ENCODE measurements at regions of chr3 and their contacts with region 1.

Region 1: GRCh38 chr3:12663936-12664908 is at the start of gene RAF1:
- DNase-seq: peak; percentile 97
- H3K4me3 Mint-ChIP-seq: peak within 1 kb of the TSS; percentile 72
- H3K27ac Mint-ChIP-seq: peak within 1 kb of the TSS; percentile 98
- H3K4me1 Mint-ChIP-seq: peaks cover 18% of the 10 kb centered on the region
- H3K27me3 Mint-ChIP-seq: no peaks in the 10 kb centered on the region
- CTCF ChIP-seq: no peak
- total RNA-seq, gene RAF1: 75.5 and 76.8 TPM in 2 replicates

Region 2: DNA sequence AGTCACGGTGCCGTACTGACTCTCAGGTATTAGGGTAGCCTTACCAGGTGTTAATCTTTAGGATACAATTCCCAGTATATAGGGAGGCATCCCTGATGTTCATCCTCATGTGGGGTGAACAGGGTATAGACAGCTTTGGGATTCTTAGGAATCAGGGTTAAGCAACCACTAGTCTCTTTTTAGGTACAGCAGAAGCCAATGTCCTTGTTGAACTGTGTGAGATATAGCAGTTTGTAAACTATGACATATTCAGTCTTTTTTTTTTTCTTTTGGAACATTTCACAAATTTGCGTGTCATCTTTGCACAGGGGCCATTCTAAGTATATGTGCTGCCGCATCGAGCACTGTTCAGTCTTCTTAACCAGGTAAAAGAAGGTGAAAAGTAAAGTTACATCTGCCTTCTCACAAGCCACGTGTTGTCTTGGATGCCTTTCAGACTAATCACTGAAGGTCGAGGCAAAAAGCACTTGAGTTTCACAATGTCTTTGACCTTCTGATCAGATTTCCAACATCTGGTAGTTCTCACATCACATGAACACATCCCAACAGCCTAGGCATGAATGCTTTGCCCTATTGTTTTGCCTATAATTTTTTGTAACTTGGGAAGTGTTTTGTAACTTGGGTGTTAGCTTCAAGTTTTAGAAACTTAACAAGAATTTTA is 162.7 kb before region 1 on chr3:
- CTCF ChIA-PET with region 1: no interaction called
- POLR2A ChIA-PET with region 1: no interaction called
- intact Hi-C with region 1: no loop called
- DNase-seq: peak; percentile 60
- H3K4me3 Mint-ChIP-seq: no peak overlapping the region
- H3K27ac Mint-ChIP-seq: peak overlapping the region; percentile 75
- H3K4me1 Mint-ChIP-seq: peaks cover 16% of the 10 kb centered on the region
- H3K27me3 Mint-ChIP-seq: no peaks in the 10 kb centered on the region
- CTCF ChIP-seq: no peak

Region 3: DNA sequence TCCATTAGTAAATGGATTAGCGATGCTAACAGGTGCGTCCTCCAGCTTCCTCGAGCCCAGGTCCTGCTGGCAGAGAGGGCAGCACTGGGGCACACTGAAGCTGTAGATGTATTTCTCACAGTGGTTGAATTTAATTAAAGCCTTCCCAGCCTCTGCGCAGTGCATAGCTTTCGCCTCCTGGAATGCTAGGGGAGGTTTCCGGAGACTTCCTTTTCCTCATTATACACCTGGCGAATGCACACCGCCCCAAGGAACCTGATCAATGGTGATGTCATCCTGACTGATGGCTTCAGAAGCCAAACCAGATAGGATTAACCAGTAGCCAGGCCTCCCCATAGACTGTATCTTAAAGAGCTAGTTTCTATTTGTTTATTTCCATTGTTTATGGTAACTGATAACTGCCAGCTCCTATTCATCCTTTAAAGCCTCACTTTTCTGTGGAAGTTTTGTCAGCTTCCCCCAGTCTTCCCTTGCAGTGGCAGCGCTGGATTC is 118.9 kb before region 1 on chr3 and contains the start of gene MKRN2OS:
- CTCF ChIA-PET with region 1: no interaction called
- POLR2A ChIA-PET with region 1: interaction called, 15 read pairs
- intact Hi-C with region 1: no loop called
- DNase-seq: peak; percentile 86
- H3K4me3 Mint-ChIP-seq: peak within 1 kb of the TSS; percentile 73
- H3K27ac Mint-ChIP-seq: peak within 1 kb of the TSS; percentile 64
- H3K4me1 Mint-ChIP-seq: peaks cover 7% of the 10 kb centered on the region
- H3K27me3 Mint-ChIP-seq: no peaks in the 10 kb centered on the region
- CTCF ChIP-seq: no peak
- total RNA-seq, gene MKRN2OS: 0.37 and 0.47 TPM in 2 replicates

Region 4: DNA sequence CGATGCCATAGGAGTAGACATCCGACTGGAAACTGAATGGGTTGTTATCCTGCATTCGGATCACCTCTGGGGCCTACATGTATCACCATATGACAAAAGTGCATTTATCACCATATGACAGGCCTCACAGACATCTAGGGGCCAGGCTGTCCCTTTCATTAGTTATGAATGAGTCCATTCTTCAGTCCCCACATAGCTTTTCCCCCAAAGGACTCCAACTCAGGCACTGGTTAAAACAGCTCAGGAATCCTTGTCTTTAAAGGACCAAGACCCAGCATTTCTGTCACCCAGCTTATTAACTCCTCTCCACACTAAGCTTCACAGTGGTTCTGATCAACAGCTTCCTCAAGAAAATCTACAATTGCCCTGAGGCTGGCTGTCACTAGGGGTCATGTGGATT is 79.0 kb before region 1 on chr3:
- CTCF ChIA-PET with region 1: interaction called, 3 read pairs
- POLR2A ChIA-PET with region 1: interaction called, 12 read pairs
- intact Hi-C with region 1: no loop called
- DNase-seq: no peak
- H3K4me3 Mint-ChIP-seq: no peak overlapping the region
- H3K27ac Mint-ChIP-seq: peak overlapping the region; percentile 59
- H3K4me1 Mint-ChIP-seq: no peaks in the 10 kb centered on the region
- H3K27me3 Mint-ChIP-seq: no peaks in the 10 kb centered on the region
- CTCF ChIP-seq: no peak

Region 5: GRCh38 chr3:12681943-12682390 is 17.7 kb after region 1 on chr3:
- CTCF ChIA-PET with region 1: interaction called, 5 read pairs
- POLR2A ChIA-PET with region 1: interaction called, 46 read pairs
- intact Hi-C with region 1: no loop called
- DNase-seq: peak; percentile 76
- H3K4me3 Mint-ChIP-seq: no peak overlapping the region
- H3K27ac Mint-ChIP-seq: peak overlapping the region; percentile 8
- H3K4me1 Mint-ChIP-seq: peaks cover 11% of the 10 kb centered on the region
- H3K27me3 Mint-ChIP-seq: no peaks in the 10 kb centered on the region
- CTCF ChIP-seq: no peak

Region 6: DNA sequence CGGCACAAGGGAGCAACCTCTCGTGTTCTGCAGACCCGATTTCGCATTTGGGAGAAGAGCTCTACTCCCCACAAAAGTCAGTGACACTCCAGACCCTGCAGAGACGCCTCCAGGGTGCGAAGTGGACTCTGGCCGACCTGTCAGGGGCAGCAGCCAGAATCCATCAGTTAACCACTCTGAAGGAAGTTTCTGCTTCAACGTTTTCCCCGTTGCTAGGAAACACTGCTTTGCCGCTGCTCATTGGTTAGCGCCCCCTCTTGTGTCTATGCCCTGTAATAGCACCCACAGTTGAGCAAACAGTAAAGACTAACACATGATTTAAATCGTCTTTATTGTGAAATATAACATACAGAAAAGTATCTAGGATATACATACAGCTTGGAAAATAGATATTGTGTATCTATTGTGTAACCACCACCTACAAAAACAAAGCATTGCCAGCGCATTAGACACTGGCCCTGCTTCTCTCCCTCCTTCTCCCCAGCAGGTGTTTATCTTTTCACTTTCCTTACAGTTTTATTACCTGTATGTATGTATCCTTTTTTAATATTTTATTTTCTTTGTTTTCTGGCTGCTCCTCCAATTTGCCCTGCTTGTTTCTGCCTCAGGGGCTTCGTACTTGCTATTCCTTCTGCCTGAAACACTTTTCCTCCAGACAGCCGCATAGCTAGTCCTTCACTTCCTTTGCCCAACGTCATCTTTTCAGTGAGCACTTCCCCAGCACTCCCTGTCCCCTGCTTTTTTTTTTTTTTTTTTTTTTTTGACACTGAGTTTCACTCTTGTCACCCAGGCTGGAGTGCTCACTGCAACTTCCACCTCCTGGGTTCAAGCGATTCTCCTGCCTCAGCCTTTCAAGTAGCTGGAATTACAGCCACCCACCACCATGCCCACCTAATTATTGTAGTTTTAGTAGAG is 56.0 kb after region 1 on chr3:
- CTCF ChIA-PET with region 1: interaction called, 4 read pairs
- POLR2A ChIA-PET with region 1: interaction called, 5 read pairs
- intact Hi-C with region 1: loop called (anchors 1 kb)
- DNase-seq: peak; percentile 84
- H3K4me3 Mint-ChIP-seq: no peak overlapping the region
- H3K27ac Mint-ChIP-seq: peak overlapping the region; percentile 63
- H3K4me1 Mint-ChIP-seq: peaks cover 15% of the 10 kb centered on the region
- H3K27me3 Mint-ChIP-seq: no peaks in the 10 kb centered on the region
- CTCF ChIP-seq: peak; percentile 84

Region 7: GRCh38 chr3:12841149-12841970 is 177.1 kb after region 1 on chr3 and contains the start of gene RPL32:
- CTCF ChIA-PET with region 1: no interaction called
- POLR2A ChIA-PET with region 1: interaction called, 11 read pairs
- intact Hi-C with region 1: no loop called
- DNase-seq: peak; percentile 95
- H3K4me3 Mint-ChIP-seq: peak within 1 kb of the TSS; percentile 96
- H3K27ac Mint-ChIP-seq: peak within 1 kb of the TSS; percentile 100
- H3K4me1 Mint-ChIP-seq: peaks cover 25% of the 10 kb centered on the region
- H3K27me3 Mint-ChIP-seq: no peaks in the 10 kb centered on the region
- CTCF ChIP-seq: peak; percentile 58
- total RNA-seq, gene RPL32: 2,288 and 2,498 TPM in 2 replicates

Region 8: DNA sequence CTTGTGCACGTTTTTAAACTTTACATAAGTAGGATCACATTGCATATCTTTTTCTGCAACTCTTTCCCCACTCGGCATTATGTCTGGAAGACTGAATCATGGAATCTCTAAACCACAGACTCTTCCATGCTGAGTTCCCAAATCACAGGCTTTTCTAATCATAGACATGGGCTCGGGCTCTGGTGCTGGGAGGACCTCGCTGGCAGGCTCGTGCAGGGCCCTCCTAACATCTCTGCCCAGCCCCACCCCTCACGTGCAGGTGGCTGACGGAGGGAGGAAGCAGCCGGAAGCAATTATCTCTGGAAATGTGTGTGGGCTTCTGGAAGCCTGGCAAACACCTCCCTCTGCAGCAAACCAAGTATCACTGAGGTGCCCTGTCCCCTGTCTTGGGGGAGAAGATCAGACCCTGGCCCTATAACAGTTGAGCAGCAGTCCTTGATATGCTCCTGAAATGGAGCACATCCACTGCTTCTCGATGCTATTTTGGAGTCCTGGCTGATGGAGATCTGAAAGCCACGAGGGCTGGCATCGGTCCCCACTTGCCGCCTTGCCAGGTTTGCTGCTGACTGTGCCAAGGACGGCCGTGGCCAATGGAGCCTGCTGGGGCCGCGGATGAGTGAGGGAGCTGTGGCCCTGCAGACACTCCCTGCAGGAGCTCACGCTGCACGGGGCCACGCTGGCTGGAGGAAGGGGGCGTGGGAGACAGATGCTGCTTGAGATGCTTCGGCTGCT is 413.4 kb after region 1 on chr3:
- CTCF ChIA-PET with region 1: no interaction called
- POLR2A ChIA-PET with region 1: no interaction called
- intact Hi-C with region 1: no loop called
- DNase-seq: no peak
- H3K4me3 Mint-ChIP-seq: no peak overlapping the region
- H3K27ac Mint-ChIP-seq: no peak overlapping the region
- H3K4me1 Mint-ChIP-seq: no peaks in the 10 kb centered on the region
- H3K27me3 Mint-ChIP-seq: peaks cover 60% of the 10 kb centered on the region
- CTCF ChIP-seq: no peak

Measured in MCF 10A (cell line).